PC-9 (cell line): ENCODE measurements at regions of chr6 and their contacts with region 1.

Region 1: DNA sequence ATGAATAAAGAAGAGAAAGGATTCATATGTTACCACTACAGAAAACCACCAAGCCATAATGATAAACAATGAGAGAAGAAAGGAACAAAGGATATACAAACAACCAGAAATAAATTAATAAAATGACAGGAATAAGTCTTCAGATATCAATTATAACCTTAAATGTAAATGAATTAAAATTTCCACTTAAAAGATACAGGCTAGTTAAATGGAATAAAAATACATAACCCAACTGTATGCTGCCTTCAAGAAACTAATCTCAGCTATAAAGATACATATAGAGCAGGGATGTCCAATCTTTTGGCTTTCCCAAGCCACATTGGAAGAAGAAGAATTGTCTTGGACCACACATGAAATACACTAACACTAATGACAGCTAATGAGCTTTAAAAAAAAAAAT is 135.9 kb upstream of the GJE1 start:
- DNase-seq: no peak
- H3K4me3 ChIP-seq: no peak overlapping the region
- H3K27ac ChIP-seq: no peak overlapping the region
- H3K4me1 ChIP-seq: no peaks in the 10 kb centered on the region
- H3K27me3 ChIP-seq: no peaks in the 10 kb centered on the region
- CTCF ChIP-seq: no peak

Region 2: DNA sequence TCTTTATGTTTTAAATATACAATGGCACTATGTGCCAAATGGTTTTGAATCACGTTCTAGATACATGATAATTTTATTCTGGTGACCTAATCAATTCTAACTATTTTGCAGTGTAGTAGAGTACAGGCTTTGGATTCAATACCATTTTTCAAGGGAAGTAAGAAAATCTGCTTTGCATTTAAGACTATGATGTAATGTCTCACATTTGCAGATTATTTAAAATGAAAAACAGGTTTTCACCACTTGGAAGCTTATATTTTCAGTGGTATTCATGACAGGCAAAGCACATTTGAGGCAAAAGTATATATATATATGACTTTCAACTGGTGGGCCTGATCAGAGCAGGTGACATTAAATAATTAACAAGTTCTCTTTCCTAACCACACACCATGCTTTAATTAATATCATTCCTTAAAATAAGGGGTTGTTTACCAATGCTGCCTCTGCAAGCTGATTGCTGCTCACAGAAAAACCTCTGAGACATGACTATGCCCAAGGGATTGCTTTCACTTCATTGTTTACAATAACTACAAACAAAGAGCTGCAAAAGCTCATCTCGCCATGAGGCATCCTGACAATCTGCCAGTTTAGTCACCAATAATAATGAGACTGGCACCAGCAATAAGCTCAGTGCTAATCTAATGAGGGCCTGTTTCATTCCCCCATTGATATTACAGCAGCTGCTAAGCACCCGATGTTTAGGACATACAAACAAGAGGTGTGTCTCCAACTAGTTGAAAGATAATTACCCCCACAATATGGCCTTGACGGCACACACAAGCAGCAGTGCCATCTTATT is 1040.1 kb before region 1 on chr6:
- CTCF ChIA-PET with region 1: interaction called, 10 read pairs
- POLR2A ChIA-PET with region 1: no interaction called
- intact Hi-C with region 1: no loop called
- DNase-seq: no peak
- H3K4me3 ChIP-seq: no peak overlapping the region
- H3K27ac ChIP-seq: no peak overlapping the region
- H3K4me1 ChIP-seq: no peaks in the 10 kb centered on the region
- H3K27me3 ChIP-seq: no peaks in the 10 kb centered on the region
- CTCF ChIP-seq: no peak

Region 3: GRCh38 chr6:142246960-142247359 is 250.1 kb after region 1 on chr6:
- CTCF ChIA-PET with region 1: no interaction called
- POLR2A ChIA-PET with region 1: no interaction called
- intact Hi-C with region 1: no loop called
- DNase-seq: no peak
- H3K4me3 ChIP-seq: no peak overlapping the region
- H3K27ac ChIP-seq: no peak overlapping the region
- H3K4me1 ChIP-seq: no peaks in the 10 kb centered on the region
- H3K27me3 ChIP-seq: no peaks in the 10 kb centered on the region
- CTCF ChIP-seq: no peak